ENCODE measurements at regions of chr6 and their contacts with region 1.

Region 1: DNA sequence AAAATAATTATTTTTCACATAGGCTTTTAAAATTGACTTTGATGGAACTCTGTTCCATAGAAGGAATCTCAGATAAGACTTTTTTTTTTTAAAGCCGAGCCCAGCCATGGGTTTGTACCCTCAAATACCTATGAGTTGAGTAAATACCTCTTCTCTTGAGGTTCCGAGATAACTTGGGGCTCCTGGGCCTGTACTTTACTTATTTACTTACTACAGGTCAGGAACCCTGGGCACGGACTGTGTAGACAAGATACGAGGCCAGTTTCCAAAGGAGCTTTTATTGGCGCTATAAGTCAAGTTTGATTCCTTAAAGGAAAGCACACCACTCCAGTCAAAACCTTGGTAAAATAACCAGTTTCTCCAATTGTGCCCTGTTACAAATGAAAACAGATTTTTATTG is 7.5 kb downstream of the AFG1L start:
- DNase-seq: no peak
- ATAC-seq: no peak
- H3K4me3 ChIP-seq: no peak overlapping the region
- H3K27ac ChIP-seq: no peak overlapping the region
- H3K4me1 ChIP-seq: no peaks in the 10 kb centered on the region
- CTCF ChIP-seq: no peak
- EP300 ChIP-seq: no peak
- POLR2A ChIP-seq: no peak
- RAD21 ChIP-seq: no peak

Region 2: GRCh38 chr6:108312605-108313004 is 10.2 kb after region 1 on chr6:
- CTCF ChIA-PET with region 1: no interaction called
- POLR2A ChIA-PET with region 1: interaction called, 10 read pairs
- DNase-seq: no peak
- ATAC-seq: no peak
- H3K4me3 ChIP-seq: no peak overlapping the region
- H3K27ac ChIP-seq: no peak overlapping the region
- H3K4me1 ChIP-seq: 0 out of 3 replicates have a peak, but pooled peaks cover 3% of the 10 kb centered on the region
- CTCF ChIP-seq: no peak
- EP300 ChIP-seq: no peak
- POLR2A ChIP-seq: no peak
- RAD21 ChIP-seq: no peak

Measured in A549 (cell line).